ENCODE measurements at regions of chr18 and their contacts with region 1.

Region 1: GRCh38 chr18:26648509-26649192 is 100.3 kb upstream of the KCTD1 start:
- DNase-seq: no peak
- ATAC-seq: no peak
- H3K4me3 ChIP-seq: no peak overlapping the region
- H3K27ac ChIP-seq: no peak overlapping the region
- H3K4me1 ChIP-seq: no peaks in the 10 kb centered on the region
- H3K27me3 ChIP-seq: no peaks in the 10 kb centered on the region

Region 2: DNA sequence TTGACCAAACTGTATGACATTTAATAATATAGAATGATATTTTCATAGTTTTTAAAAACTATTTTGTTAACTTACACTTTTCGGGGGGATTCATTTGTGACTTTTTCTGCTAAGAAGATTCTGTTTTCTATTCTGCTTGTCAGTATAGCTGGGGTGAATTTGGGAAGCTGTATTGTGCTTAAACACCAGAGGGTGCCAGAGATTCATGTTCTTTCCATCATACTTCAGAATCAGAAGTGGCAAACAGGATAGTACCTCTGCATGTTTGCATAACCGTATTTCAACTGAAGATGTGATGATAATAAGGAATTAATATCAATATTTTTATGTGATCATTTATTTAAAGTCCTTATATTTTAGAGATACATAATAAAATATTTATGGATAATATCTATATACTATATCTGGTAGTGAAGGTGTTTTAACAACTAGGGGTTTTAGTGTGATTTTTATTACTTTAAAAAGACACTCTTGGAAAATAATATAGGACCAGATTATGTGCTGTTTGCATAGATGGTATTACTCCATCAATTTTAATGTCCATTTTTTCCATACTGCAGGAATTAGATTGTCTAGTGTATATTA is 341.4 kb before region 1 on chr18:
- intact Hi-C with region 1: loop called in 1 of 4 experiments (anchors 5 kb)
- DNase-seq: no peak
- ATAC-seq: no peak
- H3K4me3 ChIP-seq: no peak overlapping the region
- H3K27ac ChIP-seq: no peak overlapping the region
- H3K4me1 ChIP-seq: no peaks in the 10 kb centered on the region
- H3K27me3 ChIP-seq: no peaks in the 10 kb centered on the region

Measured in right cardiac atrium (tissue), 5 donors.